ENCODE measurements at regions of chr6 and their contacts with region 1.

Region 1: GRCh38 chr6:155327326-155328073 is 13.2 kb upstream of the TFB1M start:
- DNase-seq: peak in 2 of 5 donors; percentile 30 to 45
- ATAC-seq: peak in 1 of 4 donors; percentile 69
- H3K4me3 ChIP-seq: no peak overlapping the region
- H3K27ac ChIP-seq: no peak overlapping the region
- H3K4me1 ChIP-seq: no peaks in the 10 kb centered on the region
- H3K27me3 ChIP-seq: no peaks in the 10 kb centered on the region
- CTCF ChIP-seq: peak; percentile 71 to 89 (median 80)
- POLR2A ChIP-seq: no peak

Region 2: GRCh38 chr6:155351273-155352129 is 24.0 kb after region 1 on chr6:
- intact Hi-C with region 1: no loop called
- DNase-seq: no peak
- ATAC-seq: no peak
- H3K4me3 ChIP-seq: no peak overlapping the region
- H3K27ac ChIP-seq: no peak overlapping the region
- H3K4me1 ChIP-seq: no peaks in the 10 kb centered on the region
- H3K27me3 ChIP-seq: peaks cover 0 to 11% (median 0%) of the 10 kb centered on the region in 9 donors
- CTCF ChIP-seq: no peak
- POLR2A ChIP-seq: no peak

Region 3: GRCh38 chr6:155493694-155494143 is 166.2 kb after region 1 on chr6:
- intact Hi-C with region 1: loop called in 3 of 10 experiments (anchors 10 kb)
- DNase-seq: peak in 2 of 5 donors; percentile 12 to 51
- ATAC-seq: peak; percentile 37 to 89 (median 78)
- H3K4me3 ChIP-seq: no peak overlapping the region
- H3K27ac ChIP-seq: peak overlapping the region in 7 of 12 donors; percentile 4 to 67 (median 50)
- H3K4me1 ChIP-seq: peaks cover 0 to 25% (median 1%) of the 10 kb centered on the region in 12 donors
- H3K27me3 ChIP-seq: no peaks in the 10 kb centered on the region
- CTCF ChIP-seq: no peak
- POLR2A ChIP-seq: no peak

Region 4: GRCh38 chr6:155530219-155530834 is 202.8 kb after region 1 on chr6:
- intact Hi-C with region 1: loop called (anchors 1 to 5 kb)
- DNase-seq: no peak
- ATAC-seq: peak in 1 of 4 donors; percentile 69
- H3K4me3 ChIP-seq: no peak overlapping the region
- H3K27ac ChIP-seq: no peak overlapping the region
- H3K4me1 ChIP-seq: peaks cover 0 to 17% (median 8%) of the 10 kb centered on the region in 12 donors
- H3K27me3 ChIP-seq: no peaks in the 10 kb centered on the region
- CTCF ChIP-seq: peak; percentile 45 to 76 (median 56)
- POLR2A ChIP-seq: no peak